CD14-positive monocyte (primary cell): ENCODE measurements at regions of chr4 and their contacts with region 1.

Region 1: DNA sequence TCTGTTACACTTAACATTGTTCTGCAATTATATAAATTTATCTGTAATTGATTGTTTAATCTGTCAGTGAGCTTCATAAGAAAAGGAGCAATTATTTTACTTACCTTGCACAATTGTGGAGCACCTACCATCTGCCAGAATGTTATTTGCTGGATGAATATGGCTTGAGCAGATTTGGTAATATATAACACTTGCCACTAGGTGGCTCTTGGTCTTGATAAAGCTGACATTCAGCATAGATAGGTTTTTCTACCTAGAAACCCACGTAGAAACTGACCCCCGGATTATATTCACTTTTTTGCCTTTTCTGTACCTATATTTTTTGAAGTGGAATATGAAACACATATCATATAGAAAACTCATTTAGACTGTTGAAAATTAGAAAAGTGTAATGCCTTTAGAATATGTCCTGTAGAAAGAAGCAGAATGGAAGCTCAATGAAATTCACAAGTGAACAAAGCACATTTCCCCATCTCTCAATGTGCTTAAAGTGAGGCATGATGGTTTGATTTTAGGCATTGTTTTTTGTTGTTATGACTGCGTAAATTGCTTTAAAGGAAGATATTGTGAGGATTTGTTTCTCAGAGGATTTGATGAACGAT is 9.5 kb downstream of the RBPJ start:
- DNase-seq: peak; percentile 31 to 65 (median 48)
- H3K4me3 ChIP-seq: no peak overlapping the region
- H3K4me3 Mint-ChIP-seq: no peak overlapping the region
- H3K27ac ChIP-seq: no peak overlapping the region
- H3K27ac Mint-ChIP-seq: peak overlapping the region in 1 of 7 donors; percentile 85
- H3K4me1 ChIP-seq: peaks cover 18 to 35% of the 10 kb centered on the region in 2 donors
- H3K4me1 Mint-ChIP-seq: peaks cover 36% of the 10 kb centered on the region
- H3K27me3 ChIP-seq: no peaks in the 10 kb centered on the region
- H3K27me3 Mint-ChIP-seq: peaks cover 0 to 4% (median 0%) of the 10 kb centered on the region in 3 donors
- CTCF ChIP-seq: peak; percentile 88

Region 2: DNA sequence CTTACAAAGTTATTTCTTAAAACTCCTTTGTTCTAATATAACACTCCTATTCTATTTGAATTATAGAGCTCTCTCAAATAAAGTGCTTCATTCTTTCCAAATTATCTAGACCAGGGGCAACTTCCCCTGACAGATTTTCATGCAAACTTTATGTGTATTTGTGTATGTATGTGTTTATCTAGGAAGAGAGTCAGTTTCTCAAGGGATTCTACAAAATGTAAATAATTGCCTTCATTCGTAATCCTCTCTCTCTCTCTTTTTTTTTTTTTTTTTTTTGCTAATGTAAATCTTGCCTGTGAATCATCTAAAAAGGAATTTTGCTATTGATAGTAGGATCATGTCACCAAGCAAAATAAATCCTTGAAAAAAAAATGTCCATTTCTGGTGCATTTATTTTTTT is 48.4 kb before region 1 on chr4:
- intact Hi-C with region 1: no loop called
- DNase-seq: no peak
- H3K4me3 ChIP-seq: no peak overlapping the region
- H3K4me3 Mint-ChIP-seq: no peak overlapping the region
- H3K27ac ChIP-seq: no peak overlapping the region
- H3K27ac Mint-ChIP-seq: no peak overlapping the region
- H3K4me1 ChIP-seq: peaks cover 10 to 20% of the 10 kb centered on the region in 2 donors
- H3K4me1 Mint-ChIP-seq: peaks cover 10% of the 10 kb centered on the region
- H3K27me3 ChIP-seq: no peaks in the 10 kb centered on the region
- H3K27me3 Mint-ChIP-seq: peaks cover 0 to 2% (median 2%) of the 10 kb centered on the region in 3 donors
- CTCF ChIP-seq: no peak

Region 3: GRCh38 chr4:26342328-26343037 is 12.2 kb after region 1 on chr4:
- intact Hi-C with region 1: loop called in 1 of 2 experiments (anchors 1 kb)
- DNase-seq: peak in 1 of 3 donors; percentile 30
- H3K4me3 ChIP-seq: no peak overlapping the region
- H3K4me3 Mint-ChIP-seq: no peak overlapping the region
- H3K27ac ChIP-seq: no peak overlapping the region
- H3K27ac Mint-ChIP-seq: no peak overlapping the region
- H3K4me1 ChIP-seq: peaks cover 6 to 13% of the 10 kb centered on the region in 2 donors
- H3K4me1 Mint-ChIP-seq: peaks cover 48% of the 10 kb centered on the region
- H3K27me3 ChIP-seq: no peaks in the 10 kb centered on the region
- H3K27me3 Mint-ChIP-seq: no peaks in the 10 kb centered on the region
- CTCF ChIP-seq: no peak

Region 4: DNA sequence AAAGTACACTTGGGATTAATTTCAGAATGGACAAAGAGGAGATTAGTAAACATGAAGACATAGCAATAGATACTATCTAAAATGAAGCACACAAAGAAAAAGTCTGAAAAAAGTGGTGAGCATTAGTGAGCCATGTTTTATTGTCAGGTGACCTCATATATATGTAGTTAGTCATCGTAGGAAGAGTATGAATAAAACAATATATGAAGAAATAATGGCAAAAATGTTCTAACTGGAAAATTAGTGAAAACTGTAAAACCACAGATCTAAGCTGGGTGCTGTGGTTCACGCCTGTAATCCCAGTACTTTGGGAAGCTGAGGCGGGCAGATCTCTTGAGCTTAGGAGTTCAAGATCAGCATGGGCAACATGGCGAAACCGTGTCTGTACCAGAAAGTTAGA is 58.4 kb after region 1 on chr4:
- intact Hi-C with region 1: loop called in 1 of 2 experiments (anchors 10 kb)
- DNase-seq: no peak
- H3K4me3 ChIP-seq: no peak overlapping the region
- H3K4me3 Mint-ChIP-seq: no peak overlapping the region
- H3K27ac ChIP-seq: no peak overlapping the region
- H3K27ac Mint-ChIP-seq: no peak overlapping the region
- H3K4me1 ChIP-seq: peaks cover 0 to 5% of the 10 kb centered on the region in 2 donors
- H3K4me1 Mint-ChIP-seq: peaks cover 11% of the 10 kb centered on the region
- H3K27me3 ChIP-seq: no peaks in the 10 kb centered on the region
- H3K27me3 Mint-ChIP-seq: no peaks in the 10 kb centered on the region
- CTCF ChIP-seq: no peak

Region 5: GRCh38 chr4:27010334-27010940 is 680.1 kb after region 1 on chr4:
- intact Hi-C with region 1: no loop called
- DNase-seq: peak; percentile 18 to 50 (median 38)
- H3K4me3 ChIP-seq: no peak overlapping the region
- H3K4me3 Mint-ChIP-seq: no peak overlapping the region
- H3K27ac ChIP-seq: no peak overlapping the region
- H3K27ac Mint-ChIP-seq: peak overlapping the region in 2 of 7 donors; percentile 36 to 41
- H3K4me1 ChIP-seq: no peaks in the 10 kb centered on the region
- H3K4me1 Mint-ChIP-seq: no peaks in the 10 kb centered on the region
- H3K27me3 ChIP-seq: no peaks in the 10 kb centered on the region
- H3K27me3 Mint-ChIP-seq: no peaks in the 10 kb centered on the region
- CTCF ChIP-seq: peak; percentile 95